Gastrocnemius medialis (tissue), 4 donors: ENCODE measurements at regions of chr7 and their contacts with region 1.

Region 1: DNA sequence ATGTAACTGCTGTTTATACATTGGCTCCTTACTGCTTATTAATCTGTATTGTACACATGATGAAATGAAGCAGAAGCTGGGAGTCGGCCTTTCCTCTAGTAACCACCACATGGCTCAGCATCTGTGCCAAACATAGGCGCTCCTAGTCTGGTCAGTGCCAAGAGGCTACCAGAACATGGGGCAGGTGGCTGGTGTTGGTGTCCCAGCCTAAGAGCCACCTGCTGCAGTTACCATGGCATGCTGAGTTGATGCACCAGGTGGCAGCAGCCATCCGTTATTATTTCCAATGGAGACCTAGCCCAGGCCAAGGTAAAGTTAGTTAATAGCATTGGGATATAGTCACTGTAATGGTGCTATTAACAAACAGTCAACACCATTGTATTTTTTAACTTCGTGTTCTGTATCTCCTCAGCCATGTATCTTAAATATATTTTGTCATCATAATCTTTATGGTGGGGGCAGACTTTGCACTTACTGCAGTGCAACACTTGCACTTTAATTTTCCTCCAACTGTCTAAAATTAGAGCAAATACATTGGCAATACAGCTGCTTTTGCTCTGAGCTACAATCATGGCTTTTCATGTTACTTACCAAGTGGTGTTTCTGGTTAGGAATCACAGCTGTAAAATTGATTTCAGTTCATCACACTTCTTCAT is 33.1 kb downstream of the HBP1 start:
- DNase-seq: peak; percentile 69 to 87
- ATAC-seq: peak; percentile 92 to 97
- H3K4me3 ChIP-seq: no peak overlapping the region
- H3K27ac ChIP-seq: peak overlapping the region; percentile 8 to 62 (median 28)
- H3K4me1 ChIP-seq: peaks cover 0 to 10% of the 10 kb centered on the region in 2 donors
- H3K27me3 ChIP-seq: no peaks in the 10 kb centered on the region
- CTCF ChIP-seq: peak; percentile 41 to 74 (median 55)
- POLR2A ChIP-seq: no peak

Region 2: DNA sequence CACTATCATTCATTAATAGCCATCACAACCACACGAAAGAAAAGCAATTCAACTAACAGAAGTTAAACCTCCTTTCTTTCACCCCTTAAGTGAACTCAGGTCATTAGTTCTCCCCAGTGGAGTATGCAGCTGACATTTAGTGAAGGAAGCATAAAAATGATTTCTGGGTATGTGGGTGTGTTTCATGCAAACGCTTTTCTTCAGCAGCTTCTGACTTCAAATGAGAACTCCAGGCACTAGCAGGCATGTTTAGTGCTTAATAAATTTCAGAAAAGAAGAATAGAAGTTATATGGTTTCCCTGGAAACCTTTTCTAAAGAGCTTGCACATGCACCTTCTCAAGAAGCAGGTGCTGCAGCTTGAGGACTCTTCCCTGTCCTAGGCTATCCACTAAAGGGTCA is 274.4 kb before region 1 on chr7:
- in situ Hi-C with region 1: no loop called
- intact Hi-C with region 1: no loop called
- DNase-seq: no peak
- ATAC-seq: no peak
- H3K4me3 ChIP-seq: no peak overlapping the region
- H3K27ac ChIP-seq: no peak overlapping the region
- H3K4me1 ChIP-seq: no peaks in the 10 kb centered on the region
- H3K27me3 ChIP-seq: no peaks in the 10 kb centered on the region
- CTCF ChIP-seq: no peak
- POLR2A ChIP-seq: no peak

Region 3: DNA sequence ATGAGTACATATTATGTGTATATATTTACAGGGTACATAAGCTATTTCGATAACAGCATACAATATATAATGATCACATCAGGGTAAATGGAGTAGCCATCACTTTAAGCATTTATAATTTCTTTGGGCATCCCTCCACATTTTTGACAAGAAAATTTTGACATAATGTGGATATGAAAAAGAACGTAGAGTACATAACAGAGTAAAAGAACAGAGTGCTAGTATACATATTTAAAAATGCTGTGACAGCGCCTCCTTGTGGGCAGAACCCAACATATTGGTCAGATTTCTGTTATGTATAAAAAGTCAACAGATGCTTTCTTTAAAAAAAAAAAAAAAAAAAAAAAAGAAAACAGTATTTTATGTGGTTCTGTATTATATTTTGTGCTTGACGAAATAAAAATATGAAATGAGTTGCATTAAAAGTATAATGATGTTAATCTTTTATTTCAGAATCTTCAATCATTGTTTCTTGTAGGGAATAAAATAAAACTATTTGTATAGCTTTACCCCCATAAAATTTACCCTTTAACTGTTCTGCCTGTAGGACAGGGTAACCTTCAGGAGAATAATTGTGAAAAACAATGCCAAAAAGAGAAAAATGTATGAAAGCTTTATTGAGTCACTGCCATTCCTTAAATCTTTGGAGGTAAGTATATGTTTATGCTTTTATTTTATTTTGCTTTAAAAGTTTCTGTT is 51.4 kb before region 1 on chr7:
- in situ Hi-C with region 1: no loop called
- intact Hi-C with region 1: no loop called
- DNase-seq: peak; percentile 7 to 46
- ATAC-seq: peak; percentile 58 to 64
- H3K4me3 ChIP-seq: no peak overlapping the region
- H3K27ac ChIP-seq: no peak overlapping the region
- H3K4me1 ChIP-seq: peaks cover 3 to 6% of the 10 kb centered on the region in 2 donors
- H3K27me3 ChIP-seq: no peaks in the 10 kb centered on the region
- CTCF ChIP-seq: peak; percentile 34 to 66 (median 50)
- POLR2A ChIP-seq: no peak

Region 4: DNA sequence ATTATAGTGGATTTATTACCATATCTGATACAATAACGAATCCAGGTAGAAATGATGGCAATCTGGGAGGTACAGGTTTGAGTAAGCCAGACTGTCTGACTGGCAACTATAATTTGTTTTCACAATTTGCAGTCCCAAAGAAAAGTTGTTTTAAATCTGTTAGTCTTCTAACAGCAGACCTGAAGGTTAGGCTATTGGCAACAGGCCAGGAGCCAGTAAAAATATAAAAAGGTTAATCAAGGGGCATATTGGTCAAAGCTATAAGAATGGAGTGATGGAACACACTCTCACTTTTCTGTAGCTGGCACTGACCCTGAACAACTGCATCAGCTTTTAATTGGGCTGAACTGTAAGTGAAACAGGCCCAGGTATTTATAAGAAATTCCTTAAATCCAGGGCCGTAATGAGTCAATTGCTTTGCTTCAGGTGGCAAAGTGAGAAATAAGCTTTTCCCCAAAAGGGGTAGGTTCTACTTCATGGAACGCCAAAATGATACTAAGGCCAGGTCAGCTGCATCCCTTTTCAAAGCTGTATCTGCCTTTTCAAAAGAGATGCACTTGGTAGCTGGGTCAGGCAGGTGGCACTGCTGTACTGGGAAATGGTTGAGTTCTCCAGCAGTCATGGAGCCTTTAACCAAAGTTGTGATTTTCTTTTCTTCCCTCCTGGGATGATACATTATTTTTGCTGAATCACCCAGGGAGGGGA is 261.0 kb after region 1 on chr7:
- in situ Hi-C with region 1: no loop called
- intact Hi-C with region 1: loop called (anchors 5 kb)
- DNase-seq: peak; percentile 10 to 57
- ATAC-seq: peak; percentile 82 to 94
- H3K4me3 ChIP-seq: no peak overlapping the region
- H3K27ac ChIP-seq: no peak overlapping the region
- H3K4me1 ChIP-seq: no peaks in the 10 kb centered on the region
- H3K27me3 ChIP-seq: no peaks in the 10 kb centered on the region
- CTCF ChIP-seq: peak; percentile 55 to 72 (median 65)
- POLR2A ChIP-seq: no peak

Region 5: DNA sequence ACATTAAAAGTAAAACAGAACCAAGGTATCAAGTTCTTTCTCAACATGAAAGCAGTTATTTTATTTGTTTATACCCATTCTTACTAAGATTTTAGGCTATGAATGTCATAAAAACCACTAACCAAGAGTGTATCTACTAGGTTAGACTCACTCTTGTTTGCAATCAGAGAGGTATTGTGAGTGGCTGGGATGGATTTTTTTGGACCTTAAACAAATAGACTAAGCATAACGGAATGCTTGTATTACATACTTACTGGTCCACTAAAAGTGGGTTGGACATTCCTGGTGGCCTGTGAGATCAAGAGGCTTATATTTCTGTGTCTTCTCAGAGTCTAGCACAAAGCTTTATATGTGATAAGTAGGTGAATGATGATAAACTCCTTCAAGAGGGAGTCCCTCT is 509.4 kb after region 1 on chr7:
- in situ Hi-C with region 1: loop called in 1 of 4 experiments (anchors 25 kb)
- intact Hi-C with region 1: no loop called
- DNase-seq: no peak
- ATAC-seq: no peak
- H3K4me3 ChIP-seq: no peak overlapping the region
- H3K27ac ChIP-seq: no peak overlapping the region
- H3K4me1 ChIP-seq: no peaks in the 10 kb centered on the region
- H3K27me3 ChIP-seq: no peaks in the 10 kb centered on the region
- CTCF ChIP-seq: no peak
- POLR2A ChIP-seq: no peak